ENCODE measurements at regions of chr11 and their contacts with region 1.

Region 1: GRCh38 chr11:64703048-64703447 is 19.9 kb downstream of the NRXN2 start:
- DNase-seq: no peak
- H3K4me3 ChIP-seq: no peak overlapping the region
- H3K27ac ChIP-seq: no peak overlapping the region
- H3K4me1 ChIP-seq: no peaks in the 10 kb centered on the region
- H3K27me3 ChIP-seq: peaks cover 15% of the 10 kb centered on the region
- CTCF ChIP-seq: no peak

Region 2: DNA sequence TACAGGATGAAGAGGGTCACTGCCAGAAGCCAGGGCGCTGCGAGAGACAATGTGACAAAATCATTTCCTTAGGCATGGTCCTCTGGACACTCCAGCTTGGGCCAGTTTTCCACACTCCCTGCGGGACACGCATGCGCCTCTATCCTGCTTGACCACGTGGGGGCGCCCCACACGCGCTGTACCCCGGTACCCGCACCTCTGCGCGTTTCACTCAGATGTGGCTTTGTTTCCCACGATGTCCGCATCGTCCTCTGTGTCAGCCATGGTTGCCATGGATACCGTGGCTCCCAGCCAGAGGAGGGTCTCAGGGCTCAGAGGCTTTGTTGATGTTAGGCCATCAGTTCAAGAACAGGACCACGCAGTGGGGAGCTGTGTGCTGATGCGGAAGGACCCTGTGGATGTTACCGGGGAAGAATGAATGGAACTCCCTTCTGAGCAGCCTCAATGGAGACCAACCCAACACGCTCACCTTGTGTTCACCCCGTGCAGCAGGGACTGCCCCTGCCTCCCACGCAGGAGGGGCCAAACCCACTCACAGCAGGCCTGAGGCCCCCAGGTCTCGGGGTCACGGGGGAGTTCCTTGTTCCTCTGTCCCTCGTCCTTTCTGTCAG is 213.1 kb before region 1 on chr11:
- CTCF ChIA-PET with region 1: interaction called, 11 read pairs
- POLR2A ChIA-PET with region 1: no interaction called
- intact Hi-C with region 1: no loop called
- DNase-seq: peak; percentile 72
- H3K4me3 ChIP-seq: no peak overlapping the region
- H3K27ac ChIP-seq: no peak overlapping the region
- H3K4me1 ChIP-seq: no peaks in the 10 kb centered on the region
- H3K27me3 ChIP-seq: peaks cover 51% of the 10 kb centered on the region
- CTCF ChIP-seq: peak; percentile 98